ENCODE measurements at regions of chr18 and their contacts with region 1.

Region 1: GRCh38 chr18:10430677-10431076 is 23.8 kb upstream of the APCDD1 start:
- DNase-seq: no peak
- ATAC-seq: no peak
- H3K4me3 ChIP-seq: no peak overlapping the region
- H3K27ac ChIP-seq: no peak overlapping the region
- H3K4me1 ChIP-seq: no peaks in the 10 kb centered on the region
- H3K27me3 ChIP-seq: no peaks in the 10 kb centered on the region
- CTCF ChIP-seq: no peak
- POLR2A ChIP-seq: no peak

Region 2: GRCh38 chr18:10453806-10454673 is 23.4 kb after region 1 on chr18 and contains the start of gene APCDD1:
- in situ Hi-C with region 1: no loop called
- intact Hi-C with region 1: loop called (anchors 1 kb)
- DNase-seq: peak; percentile 35 to 54
- ATAC-seq: peak; percentile 57 to 69
- H3K4me3 ChIP-seq: peak within 1 kb of the TSS; percentile 50 to 67 (median 57)
- H3K27ac ChIP-seq: peak within 1 kb of the TSS; percentile 70 to 83 (median 76)
- H3K4me1 ChIP-seq: peaks cover 0 to 14% of the 10 kb centered on the region in 2 donors
- H3K27me3 ChIP-seq: peaks cover 23 to 39% (median 32%) of the 10 kb centered on the region in 3 donors
- CTCF ChIP-seq: no peak
- POLR2A ChIP-seq: peak in 1 of 2 donors; percentile 59
- total RNA-seq, gene APCDD1: 4.6 to 13.0 (median 7.5) TPM

Region 3: GRCh38 chr18:10814336-10814735 is 383.7 kb after region 1 on chr18:
- in situ Hi-C with region 1: no loop called
- intact Hi-C with region 1: no loop called
- DNase-seq: no peak
- ATAC-seq: no peak
- H3K4me3 ChIP-seq: no peak overlapping the region
- H3K27ac ChIP-seq: no peak overlapping the region
- H3K4me1 ChIP-seq: no peaks in the 10 kb centered on the region
- H3K27me3 ChIP-seq: no peaks in the 10 kb centered on the region
- CTCF ChIP-seq: no peak
- POLR2A ChIP-seq: no peak